Caco-2 (cell line): ENCODE measurements at regions of chrX and their contacts with region 1.

Region 1: DNA sequence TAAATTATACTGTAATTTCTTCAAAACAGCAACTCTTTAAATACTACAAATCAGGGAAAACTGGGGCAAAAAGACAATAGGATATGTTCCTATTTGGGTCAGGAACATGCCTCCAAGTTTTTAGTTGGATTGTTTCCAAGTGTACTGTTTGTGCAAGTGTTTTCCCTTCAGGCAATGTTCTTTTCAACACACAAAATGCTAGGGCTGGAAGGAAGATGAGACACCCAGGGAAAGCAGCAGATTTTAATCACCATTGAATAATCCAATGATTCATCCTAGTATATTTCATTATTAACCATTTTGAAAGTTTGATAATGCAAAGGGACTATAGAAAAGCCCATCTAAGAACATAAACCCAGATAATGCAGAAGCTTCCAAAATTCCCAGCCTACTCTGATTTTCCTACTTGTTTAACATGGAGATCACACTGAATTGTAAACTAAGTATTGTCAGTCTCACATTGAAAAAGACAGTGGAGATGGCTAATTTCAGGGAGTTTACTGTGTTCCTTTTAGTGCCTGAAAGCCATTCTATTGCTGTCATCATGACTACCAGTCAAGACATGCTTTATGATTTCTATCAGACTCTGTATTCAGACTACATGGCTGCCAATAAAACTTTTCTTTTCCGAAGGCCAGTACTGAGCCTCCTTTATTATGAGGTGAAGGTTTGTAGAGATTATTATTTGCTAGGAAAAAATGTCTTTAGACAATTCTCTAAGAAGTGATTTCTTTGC is 38.6 kb downstream of the COL4A6 start:
- DNase-seq: no peak
- H3K4me3 ChIP-seq: no peak overlapping the region
- H3K4me3 Mint-ChIP-seq: no peak overlapping the region
- H3K27ac Mint-ChIP-seq: peak overlapping the region; percentile 20
- H3K4me1 ChIP-seq: peaks cover 35% of the 10 kb centered on the region
- H3K4me1 Mint-ChIP-seq: peaks cover 28% of the 10 kb centered on the region
- H3K27me3 ChIP-seq: no peaks in the 10 kb centered on the region
- H3K27me3 Mint-ChIP-seq: no peaks in the 10 kb centered on the region
- CTCF ChIP-seq: no peak

Region 2: DNA sequence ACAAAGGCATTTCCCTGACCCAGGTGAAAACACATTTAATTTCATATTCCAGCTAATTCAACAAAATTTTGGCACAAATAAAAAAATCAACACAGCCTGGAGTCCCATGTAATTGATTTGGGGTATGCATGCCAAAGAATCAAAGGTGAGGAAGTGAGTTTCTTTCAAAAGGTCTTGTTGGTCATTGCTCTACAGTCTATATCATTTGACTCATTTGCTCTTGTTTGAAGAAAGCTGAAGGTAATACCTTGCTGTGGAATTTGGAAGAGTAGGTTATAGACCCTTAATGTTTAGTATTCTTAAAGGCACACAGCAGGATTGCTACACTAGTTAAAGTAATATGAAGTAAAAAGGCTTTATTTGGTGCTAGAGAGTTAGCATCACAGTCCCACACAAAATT is 13.2 kb after region 1 on chrX:
- CTCF ChIA-PET with region 1: no interaction called
- POLR2A ChIA-PET with region 1: no interaction called
- intact Hi-C with region 1: loop called (anchors 2 kb)
- DNase-seq: no peak
- H3K4me3 ChIP-seq: no peak overlapping the region
- H3K4me3 Mint-ChIP-seq: no peak overlapping the region
- H3K27ac Mint-ChIP-seq: no peak overlapping the region
- H3K4me1 ChIP-seq: 0 out of 2 replicates have a peak, but pooled peaks cover 18% of the 10 kb centered on the region
- H3K4me1 Mint-ChIP-seq: peaks cover 9% of the 10 kb centered on the region
- H3K27me3 ChIP-seq: no peaks in the 10 kb centered on the region
- H3K27me3 Mint-ChIP-seq: no peaks in the 10 kb centered on the region
- CTCF ChIP-seq: no peak